AG04449 (cell line): ENCODE measurements at regions of chr6 and their contacts with region 1.

Region 1: GRCh38 chr6:125858427-125859320 is 67.9 kb downstream of the NCOA7 start:
- DNase-seq: no peak
- H3K4me3 ChIP-seq: no peak overlapping the region
- CTCF ChIP-seq: peak; percentile 88

Region 2: GRCh38 chr6:125834348-125834747 is 24.3 kb before region 1 on chr6:
- CTCF ChIA-PET with region 1: interaction called, 15 read pairs
- POLR2A ChIA-PET with region 1: no interaction called
- DNase-seq: no peak
- H3K4me3 ChIP-seq: no peak overlapping the region
- CTCF ChIP-seq: no peak

Region 3: GRCh38 chr6:125843593-125843992 is 15.1 kb before region 1 on chr6:
- CTCF ChIA-PET with region 1: interaction called, 10 read pairs
- POLR2A ChIA-PET with region 1: no interaction called
- DNase-seq: no peak
- H3K4me3 ChIP-seq: no peak overlapping the region
- CTCF ChIP-seq: no peak